CD14-positive monocyte (primary cell): ENCODE measurements at regions of chr19 and their contacts with region 1.

Region 1: DNA sequence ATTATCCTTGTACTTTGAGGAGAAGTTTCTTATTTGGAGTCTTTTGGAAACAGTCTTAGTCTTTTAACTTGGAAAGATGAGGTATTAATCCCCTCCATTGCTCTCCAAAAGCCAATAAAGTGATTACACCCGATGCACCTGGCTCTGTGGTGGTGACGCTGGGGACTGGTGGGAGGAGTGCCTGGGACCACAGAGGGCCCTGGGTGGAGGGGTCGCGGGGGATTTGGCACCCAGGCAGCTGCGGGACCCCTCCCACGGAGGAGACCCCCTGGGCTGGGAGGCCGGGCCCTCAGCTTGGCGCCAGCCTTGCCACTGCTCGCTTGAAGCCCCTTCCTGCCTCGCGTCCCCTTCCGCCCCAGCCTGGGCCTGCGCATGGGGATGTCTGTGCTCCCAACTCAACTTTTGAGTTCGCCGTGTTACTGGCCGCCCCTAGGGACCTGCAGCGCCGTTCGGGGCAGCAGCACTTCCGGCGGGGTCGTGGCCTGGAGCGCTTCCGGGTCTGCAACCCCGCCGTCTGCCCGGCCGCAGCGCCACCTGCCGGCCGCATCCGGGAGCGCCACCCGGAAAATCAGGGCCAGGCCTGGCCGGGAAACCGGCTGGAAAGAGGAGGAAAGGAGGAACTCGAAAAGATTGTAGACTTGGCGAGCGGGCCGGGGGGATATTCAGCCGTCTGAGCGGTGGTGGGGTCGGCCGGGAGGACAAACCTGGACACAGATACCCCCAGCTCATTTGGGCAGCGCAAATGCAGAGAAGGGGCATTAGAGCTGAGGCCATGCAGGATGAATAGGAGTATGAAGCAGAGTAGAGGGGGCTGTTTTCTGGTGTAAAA is 8.4 kb downstream of the PEAK3 start:
- DNase-seq: peak; percentile 76 to 81 (median 79)
- H3K4me3 ChIP-seq: peak overlapping the region; percentile 20 to 100 (median 41)
- H3K4me3 Mint-ChIP-seq: peak overlapping the region; percentile 70 to 75
- H3K27ac ChIP-seq: peak overlapping the region; percentile 71 to 96
- H3K27ac Mint-ChIP-seq: peak overlapping the region; percentile 84 to 96 (median 91)
- H3K4me1 ChIP-seq: peaks cover 43 to 58% of the 10 kb centered on the region in 2 donors
- H3K4me1 Mint-ChIP-seq: peaks cover 46% of the 10 kb centered on the region
- H3K27me3 ChIP-seq: no peaks in the 10 kb centered on the region
- H3K27me3 Mint-ChIP-seq: peaks cover 0 to 5% (median 2%) of the 10 kb centered on the region in 3 donors
- CTCF ChIP-seq: peak; percentile 99

Region 2: DNA sequence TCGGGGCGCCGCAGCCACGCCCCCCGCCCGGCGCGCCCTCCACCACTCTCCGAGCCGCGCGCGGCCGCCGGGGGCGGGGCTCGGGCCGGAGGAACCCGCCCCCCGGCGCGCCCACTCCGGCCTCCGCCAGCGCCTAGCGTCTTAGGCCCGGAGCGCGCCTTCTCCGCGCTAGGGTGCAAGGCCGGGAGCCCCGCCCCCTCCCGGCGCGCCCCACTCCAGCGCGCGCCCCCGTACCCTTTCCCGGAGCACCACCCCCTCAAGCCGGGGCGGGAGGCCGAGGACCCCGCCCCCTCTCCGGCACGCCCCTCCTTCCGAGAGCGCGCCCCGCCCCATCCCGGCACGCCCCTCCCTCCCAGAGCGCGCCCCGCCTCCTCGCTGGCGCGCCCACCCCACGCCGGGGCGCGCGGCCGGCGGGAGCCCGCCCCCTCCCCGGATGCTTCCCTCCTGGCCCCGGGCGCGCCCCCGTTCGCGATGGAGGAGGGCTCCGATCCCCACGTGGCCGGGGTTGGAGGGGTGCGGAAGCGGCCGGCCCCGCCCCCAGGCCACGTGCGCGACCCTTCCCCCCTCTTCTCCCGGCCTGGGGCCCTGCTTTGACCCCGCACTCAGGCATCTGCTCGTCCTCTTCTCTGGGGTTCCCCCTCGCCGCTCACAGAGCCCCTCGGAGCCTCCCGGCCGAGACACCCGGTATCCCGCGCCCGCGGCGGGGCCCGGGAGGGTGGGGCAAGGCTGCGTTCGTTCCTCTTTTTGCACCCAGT is 409.7 kb before region 1 on chr19:
- intact Hi-C with region 1: no loop called
- DNase-seq: peak; percentile 84 to 92 (median 90)
- H3K4me3 ChIP-seq: peak overlapping the region; percentile 67 to 93 (median 93)
- H3K4me3 Mint-ChIP-seq: peak overlapping the region; percentile 80 to 81
- H3K27ac ChIP-seq: peak overlapping the region; percentile 92 to 97
- H3K27ac Mint-ChIP-seq: peak overlapping the region; percentile 54 to 95 (median 92)
- H3K4me1 ChIP-seq: peaks cover 45 to 47% of the 10 kb centered on the region in 2 donors
- H3K4me1 Mint-ChIP-seq: peaks cover 39% of the 10 kb centered on the region
- H3K27me3 ChIP-seq: no peaks in the 10 kb centered on the region
- H3K27me3 Mint-ChIP-seq: peaks cover 0 to 4% (median 2%) of the 10 kb centered on the region in 3 donors
- CTCF ChIP-seq: no peak

Region 3: DNA sequence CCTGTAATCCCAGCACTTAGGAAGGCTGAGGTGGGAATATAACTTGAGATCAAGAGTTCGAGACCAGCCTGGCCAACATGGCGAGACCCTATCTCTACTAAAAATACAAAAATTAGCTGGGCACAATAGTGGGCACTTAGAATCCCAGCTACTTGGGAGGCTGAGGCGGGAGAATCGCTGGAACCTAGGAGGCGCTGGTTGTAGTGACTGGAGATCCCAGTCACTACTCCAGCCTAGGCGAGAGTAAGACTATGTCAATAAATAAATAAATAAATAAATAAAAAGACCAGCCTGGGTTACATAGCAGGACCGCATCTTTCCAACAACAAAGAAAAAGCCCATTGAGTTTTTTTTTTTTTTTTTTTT is 111.9 kb before region 1 on chr19:
- intact Hi-C with region 1: loop called (anchors 2 to 5 kb)
- DNase-seq: no peak
- H3K4me3 ChIP-seq: no peak overlapping the region
- H3K4me3 Mint-ChIP-seq: no peak overlapping the region
- H3K27ac ChIP-seq: no peak overlapping the region
- H3K27ac Mint-ChIP-seq: peak overlapping the region in 1 of 7 donors; percentile 54
- H3K4me1 ChIP-seq: peaks cover 18 to 29% of the 10 kb centered on the region in 2 donors
- H3K4me1 Mint-ChIP-seq: peaks cover 22% of the 10 kb centered on the region
- H3K27me3 ChIP-seq: no peaks in the 10 kb centered on the region
- H3K27me3 Mint-ChIP-seq: peaks cover 0 to 3% (median 1%) of the 10 kb centered on the region in 3 donors
- CTCF ChIP-seq: no peak

Region 4: GRCh38 chr19:2168619-2169424 is 104.7 kb before region 1 on chr19:
- intact Hi-C with region 1: loop called in 1 of 2 experiments (anchors 5 kb)
- DNase-seq: peak; percentile 99 to 100 (median 99)
- H3K4me3 ChIP-seq: peak overlapping the region; percentile 4 to 70 (median 31)
- H3K4me3 Mint-ChIP-seq: peak overlapping the region; percentile 75 to 83
- H3K27ac ChIP-seq: peak overlapping the region; percentile 99
- H3K27ac Mint-ChIP-seq: peak overlapping the region; percentile 99 to 100 (median 100)
- H3K4me1 ChIP-seq: peaks cover 45 to 51% of the 10 kb centered on the region in 2 donors
- H3K4me1 Mint-ChIP-seq: peaks cover 61% of the 10 kb centered on the region
- H3K27me3 ChIP-seq: no peaks in the 10 kb centered on the region
- H3K27me3 Mint-ChIP-seq: peaks cover 0 to 3% (median 0%) of the 10 kb centered on the region in 3 donors
- CTCF ChIP-seq: no peak

Region 5: GRCh38 chr19:2236314-2237050 is 37.1 kb before region 1 on chr19 and contains the starts of genes PLEKHJ1 and SF3A2:
- intact Hi-C with region 1: loop called (anchors 1 to 2 kb)
- DNase-seq: peak; percentile 97 to 98 (median 98)
- H3K4me3 ChIP-seq: peak within 1 kb of the TSS; percentile 54 to 88 (median 73)
- H3K4me3 Mint-ChIP-seq: peak within 1 kb of the TSS; percentile 87 to 94
- H3K27ac ChIP-seq: peak within 1 kb of the TSS; percentile 97 to 99
- H3K27ac Mint-ChIP-seq: peak within 1 kb of the TSS; percentile 97 to 100 (median 99)
- H3K4me1 ChIP-seq: peaks cover 51 to 66% of the 10 kb centered on the region in 2 donors
- H3K4me1 Mint-ChIP-seq: peaks cover 62% of the 10 kb centered on the region
- H3K27me3 ChIP-seq: no peaks in the 10 kb centered on the region
- H3K27me3 Mint-ChIP-seq: peaks cover 0 to 2% (median 1%) of the 10 kb centered on the region in 3 donors
- CTCF ChIP-seq: peak; percentile 99
- polyA plus RNA-seq, gene PLEKHJ1: 62.1 to 90.0 (median 69.0) TPM
- polyA plus RNA-seq, gene SF3A2: 8.0 to 70.8 (median 11.6) TPM

Region 6: GRCh38 chr19:2289714-2290435 is 16.3 kb after region 1 on chr19:
- intact Hi-C with region 1: no loop called
- DNase-seq: peak; percentile 89 to 92 (median 89)
- H3K4me3 ChIP-seq: peak overlapping the region; percentile 38 to 82 (median 65)
- H3K4me3 Mint-ChIP-seq: peak overlapping the region; percentile 82 to 91
- H3K27ac ChIP-seq: peak overlapping the region; percentile 79 to 96
- H3K27ac Mint-ChIP-seq: peak overlapping the region; percentile 87 to 97 (median 96)
- H3K4me1 ChIP-seq: peaks cover 52 to 86% of the 10 kb centered on the region in 2 donors
- H3K4me1 Mint-ChIP-seq: peaks cover 70% of the 10 kb centered on the region
- H3K27me3 ChIP-seq: no peaks in the 10 kb centered on the region
- H3K27me3 Mint-ChIP-seq: peaks cover 4 to 17% (median 13%) of the 10 kb centered on the region in 3 donors
- CTCF ChIP-seq: no peak

Region 7: GRCh38 chr19:2315818-2316353 is 42.3 kb after region 1 on chr19:
- intact Hi-C with region 1: loop called in 1 of 2 experiments (anchors 5 kb)
- DNase-seq: peak; percentile 90 to 94 (median 93)
- H3K4me3 ChIP-seq: peak overlapping the region in 1 of 3 experiments; percentile 30
- H3K4me3 Mint-ChIP-seq: peak overlapping the region; percentile 55 to 69
- H3K27ac ChIP-seq: peak overlapping the region; percentile 75 to 78
- H3K27ac Mint-ChIP-seq: peak overlapping the region; percentile 85 to 96 (median 93)
- H3K4me1 ChIP-seq: peaks cover 15 to 21% of the 10 kb centered on the region in 2 donors
- H3K4me1 Mint-ChIP-seq: peaks cover 16% of the 10 kb centered on the region
- H3K27me3 ChIP-seq: peaks cover 0 to 14% of the 10 kb centered on the region in 2 donors
- H3K27me3 Mint-ChIP-seq: peaks cover 13 to 36% (median 29%) of the 10 kb centered on the region in 3 donors
- CTCF ChIP-seq: peak; percentile 81

Region 8: DNA sequence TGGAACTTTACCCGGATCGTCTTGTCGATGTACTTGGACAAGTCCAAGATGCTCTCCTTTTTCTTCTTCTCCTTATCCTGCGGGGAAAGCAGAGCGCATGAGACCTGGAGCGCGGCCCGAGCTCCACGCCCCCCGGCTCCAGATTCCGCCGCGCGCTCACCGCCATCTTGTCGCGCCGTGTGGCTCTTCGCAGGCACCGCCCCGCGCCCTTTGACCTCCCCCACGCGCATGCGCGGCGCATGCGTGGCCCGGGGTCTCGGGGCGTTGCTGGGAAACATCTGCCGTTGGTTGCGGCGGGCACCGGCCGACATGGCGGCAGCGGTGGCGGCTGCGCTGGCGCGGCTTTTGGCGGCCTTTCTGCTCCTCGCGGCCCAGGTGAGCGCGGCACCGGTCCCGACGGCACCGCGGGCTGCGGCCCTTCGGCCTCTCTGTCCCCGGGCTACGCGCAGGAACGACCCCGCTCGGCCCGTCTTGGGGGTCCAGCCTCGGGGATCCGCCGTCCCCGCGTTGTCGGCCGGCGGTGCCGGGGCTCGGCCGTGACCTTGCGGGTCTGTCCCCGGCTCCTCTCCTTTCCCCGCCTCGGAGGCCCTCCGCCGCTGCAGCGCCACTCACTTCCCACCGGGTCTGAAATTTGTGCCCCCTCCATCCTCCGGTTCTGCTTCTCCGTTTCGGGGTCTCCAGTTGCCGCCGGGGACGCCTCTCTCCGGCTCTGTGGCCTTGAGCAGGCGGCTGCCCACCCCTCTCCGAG is 55.0 kb after region 1 on chr19 and contains the starts of genes LSM7 and SPPL2B:
- intact Hi-C with region 1: loop called in 1 of 2 experiments (anchors 5 kb)
- DNase-seq: peak; percentile 82 to 90 (median 89)
- H3K4me3 ChIP-seq: peak within 1 kb of the TSS; percentile 82 to 97 (median 92)
- H3K4me3 Mint-ChIP-seq: peak within 1 kb of the TSS; percentile 100
- H3K27ac ChIP-seq: peak within 1 kb of the TSS; percentile 75 to 80
- H3K27ac Mint-ChIP-seq: peak within 1 kb of the TSS; percentile 98 to 99 (median 99)
- H3K4me1 ChIP-seq: peaks cover 34 to 50% of the 10 kb centered on the region in 2 donors
- H3K4me1 Mint-ChIP-seq: peaks cover 65% of the 10 kb centered on the region
- H3K27me3 ChIP-seq: no peaks in the 10 kb centered on the region
- H3K27me3 Mint-ChIP-seq: peaks cover 0 to 10% (median 3%) of the 10 kb centered on the region in 3 donors
- CTCF ChIP-seq: no peak
- polyA plus RNA-seq, gene LSM7: 98.6 to 312 (median 132) TPM
- polyA plus RNA-seq, gene SPPL2B: 5.7 to 64.9 (median 8.7) TPM

Region 9: DNA sequence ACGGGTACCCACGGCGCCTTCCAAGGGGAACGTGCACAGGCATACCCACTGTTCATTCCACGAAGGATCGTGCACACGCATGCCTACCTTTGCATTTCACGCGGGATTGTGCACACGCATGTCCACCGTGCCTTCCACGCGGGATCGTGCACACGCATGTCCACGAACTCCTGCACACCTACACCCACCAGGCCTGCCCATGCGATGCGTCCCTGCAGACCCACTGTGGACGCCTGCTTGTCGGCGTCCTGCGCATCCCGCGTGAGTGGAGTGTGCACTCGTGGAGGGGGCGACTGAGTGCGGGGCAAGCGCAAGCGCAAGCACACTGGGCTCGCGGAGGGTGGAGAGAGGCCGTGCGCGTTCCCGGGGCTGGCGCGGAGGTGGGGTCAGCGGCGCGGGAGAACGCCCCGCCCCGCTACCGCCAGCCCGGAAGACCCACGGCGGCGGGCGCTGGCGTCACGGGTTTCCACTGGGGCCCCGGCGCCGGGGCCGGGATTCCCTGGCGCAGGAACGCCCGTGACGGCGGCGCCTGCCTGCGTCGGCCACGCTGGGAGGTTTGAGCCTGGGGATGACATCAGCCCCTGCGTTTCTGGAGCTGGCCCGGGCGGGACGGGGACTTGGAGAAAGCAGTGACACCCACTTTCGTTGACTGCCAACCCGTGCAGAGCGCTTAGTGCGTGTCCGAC is 221.0 kb after region 1 on chr19:
- intact Hi-C with region 1: no loop called
- DNase-seq: peak; percentile 62 to 86 (median 67)
- H3K4me3 ChIP-seq: peak overlapping the region; percentile 58 to 89 (median 84)
- H3K4me3 Mint-ChIP-seq: peak overlapping the region; percentile 75 to 90
- H3K27ac ChIP-seq: peak overlapping the region; percentile 59 to 79
- H3K27ac Mint-ChIP-seq: peak overlapping the region in 6 of 7 donors; percentile 18 to 76 (median 54)
- H3K4me1 ChIP-seq: peaks cover 24 to 54% of the 10 kb centered on the region in 2 donors
- H3K4me1 Mint-ChIP-seq: peaks cover 32% of the 10 kb centered on the region
- H3K27me3 ChIP-seq: peaks cover 3 to 43% of the 10 kb centered on the region in 2 donors
- H3K27me3 Mint-ChIP-seq: peaks cover 46 to 54% (median 48%) of the 10 kb centered on the region in 3 donors
- CTCF ChIP-seq: no peak

Region 10: GRCh38 chr19:2610637-2611482 is 337.3 kb after region 1 on chr19:
- intact Hi-C with region 1: loop called in 1 of 2 experiments (anchors 10 kb)
- DNase-seq: peak; percentile 67 to 83 (median 81)
- H3K4me3 ChIP-seq: peak overlapping the region; percentile 36 to 81 (median 71)
- H3K4me3 Mint-ChIP-seq: peak overlapping the region; percentile 88 to 95
- H3K27ac ChIP-seq: peak overlapping the region in 1 of 2 donors; percentile 62
- H3K27ac Mint-ChIP-seq: peak overlapping the region in 6 of 7 donors; percentile 53 to 90 (median 77)
- H3K4me1 ChIP-seq: peaks cover 29 to 42% of the 10 kb centered on the region in 2 donors
- H3K4me1 Mint-ChIP-seq: peaks cover 36% of the 10 kb centered on the region
- H3K27me3 ChIP-seq: no peaks in the 10 kb centered on the region
- H3K27me3 Mint-ChIP-seq: peaks cover 2 to 4% (median 2%) of the 10 kb centered on the region in 3 donors
- CTCF ChIP-seq: peak; percentile 96